ENCODE measurements at regions of chr13 and their contacts with region 1.

Region 1: GRCh38 chr13:45120967-45121831 is 889 bp downstream of the GTF2F2 start:
- DNase-seq: peak; percentile 56
- H3K4me3 ChIP-seq: peak overlapping the region; percentile 80
- H3K27ac ChIP-seq: peak overlapping the region; percentile 39
- H3K4me1 ChIP-seq: peaks cover 14% of the 10 kb centered on the region
- CTCF ChIP-seq: peak; percentile 62

Region 2: GRCh38 chr13:45149964-45150363 is 28.8 kb after region 1 on chr13:
- CTCF ChIA-PET with region 1: no interaction called
- POLR2A ChIA-PET with region 1: no interaction called
- intact Hi-C with region 1: loop called (anchors 1 kb)
- DNase-seq: no peak
- H3K4me3 ChIP-seq: no peak overlapping the region
- H3K27ac ChIP-seq: no peak overlapping the region
- H3K4me1 ChIP-seq: no peaks in the 10 kb centered on the region
- CTCF ChIP-seq: no peak

Region 3: DNA sequence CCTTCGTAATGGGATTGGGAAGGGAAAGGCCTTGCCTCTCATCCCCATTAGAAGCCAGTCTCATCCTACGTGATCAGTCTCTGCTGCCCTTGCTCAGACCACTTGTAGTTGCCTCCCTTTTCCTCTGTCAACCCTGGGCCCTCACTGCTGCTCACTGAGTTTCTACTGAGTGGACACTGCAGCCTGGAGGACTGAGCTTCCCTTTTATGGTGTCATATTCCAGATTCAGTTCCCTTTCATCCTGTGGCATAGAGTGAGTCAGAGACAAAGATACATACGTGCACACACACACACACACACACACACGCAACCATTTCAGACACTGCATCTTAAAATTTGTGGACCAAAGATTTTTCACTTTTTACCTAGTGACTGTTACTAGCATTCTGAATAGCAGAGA is 400.1 kb after region 1 on chr13:
- CTCF ChIA-PET with region 1: no interaction called
- POLR2A ChIA-PET with region 1: no interaction called
- intact Hi-C with region 1: no loop called
- DNase-seq: no peak
- H3K4me3 ChIP-seq: no peak overlapping the region
- H3K27ac ChIP-seq: no peak overlapping the region
- H3K4me1 ChIP-seq: no peaks in the 10 kb centered on the region
- CTCF ChIP-seq: no peak